ENCODE measurements at regions of chrX and their contacts with region 1.

Region 1: GRCh38 chrX:131854581-131854980 is 168.5 kb upstream of the STK26 start:
- DNase-seq: no peak
- CTCF ChIP-seq: no peak

Region 2: GRCh38 chrX:132092439-132093065 is 238.0 kb after region 1 on chrX:
- in situ Hi-C with region 1: loop called (anchors 25 kb)
- DNase-seq: peak; percentile 43
- CTCF ChIP-seq: peak; percentile 78